ENCODE measurements at regions of chr6 and their contacts with region 1.

Region 1: DNA sequence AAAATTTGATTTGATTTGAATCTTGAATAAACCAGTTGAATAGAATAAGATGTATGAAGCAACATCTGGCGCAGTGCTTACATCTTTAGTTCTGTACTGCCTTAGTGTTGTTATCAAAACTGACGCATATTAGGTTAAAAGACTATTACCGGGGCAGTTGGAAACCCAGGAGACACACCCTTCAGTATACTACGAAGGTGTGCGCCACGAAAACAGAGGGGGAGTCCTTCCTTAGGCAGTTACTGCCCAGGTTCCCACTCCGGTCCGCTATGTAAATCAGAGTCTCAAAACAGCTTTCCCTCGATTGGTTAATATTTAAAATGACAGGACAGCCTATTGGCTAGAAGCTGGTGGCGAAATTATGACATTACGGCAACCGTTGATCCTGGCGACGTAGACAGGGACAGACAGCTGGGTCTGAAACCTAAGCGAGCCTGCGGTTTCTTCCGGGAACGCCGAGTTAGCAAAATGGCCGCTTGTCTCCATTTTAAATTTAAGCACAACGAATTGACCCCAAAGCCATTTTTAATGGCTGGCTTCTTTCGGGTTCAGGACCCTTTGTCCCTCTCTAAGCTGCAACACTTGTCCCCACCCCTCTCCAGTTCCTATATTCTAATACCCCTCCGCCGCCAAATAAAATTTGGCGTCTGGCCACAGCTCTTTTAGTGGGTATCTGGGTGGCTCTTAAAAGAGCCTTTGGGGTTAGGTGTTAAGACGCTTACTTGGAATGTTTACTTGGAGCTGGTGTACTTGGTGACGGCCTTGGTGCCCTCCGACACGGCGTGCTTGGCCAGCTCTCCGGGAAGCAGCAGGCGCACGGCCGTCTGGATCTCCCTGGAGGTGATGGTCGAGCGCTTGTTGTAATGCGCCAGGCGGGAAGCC is 35.8 kb downstream of the HFE start:
- DNase-seq: peak; percentile 99
- ATAC-seq: peak; percentile 50
- H3K4me3 ChIP-seq: peak overlapping the region; percentile 96
- H3K27ac ChIP-seq: peak overlapping the region; percentile 94
- H3K4me1 ChIP-seq: peaks cover 49% of the 10 kb centered on the region
- H3K27me3 ChIP-seq: no peaks in the 10 kb centered on the region
- CTCF ChIP-seq: no peak

Region 2: DNA sequence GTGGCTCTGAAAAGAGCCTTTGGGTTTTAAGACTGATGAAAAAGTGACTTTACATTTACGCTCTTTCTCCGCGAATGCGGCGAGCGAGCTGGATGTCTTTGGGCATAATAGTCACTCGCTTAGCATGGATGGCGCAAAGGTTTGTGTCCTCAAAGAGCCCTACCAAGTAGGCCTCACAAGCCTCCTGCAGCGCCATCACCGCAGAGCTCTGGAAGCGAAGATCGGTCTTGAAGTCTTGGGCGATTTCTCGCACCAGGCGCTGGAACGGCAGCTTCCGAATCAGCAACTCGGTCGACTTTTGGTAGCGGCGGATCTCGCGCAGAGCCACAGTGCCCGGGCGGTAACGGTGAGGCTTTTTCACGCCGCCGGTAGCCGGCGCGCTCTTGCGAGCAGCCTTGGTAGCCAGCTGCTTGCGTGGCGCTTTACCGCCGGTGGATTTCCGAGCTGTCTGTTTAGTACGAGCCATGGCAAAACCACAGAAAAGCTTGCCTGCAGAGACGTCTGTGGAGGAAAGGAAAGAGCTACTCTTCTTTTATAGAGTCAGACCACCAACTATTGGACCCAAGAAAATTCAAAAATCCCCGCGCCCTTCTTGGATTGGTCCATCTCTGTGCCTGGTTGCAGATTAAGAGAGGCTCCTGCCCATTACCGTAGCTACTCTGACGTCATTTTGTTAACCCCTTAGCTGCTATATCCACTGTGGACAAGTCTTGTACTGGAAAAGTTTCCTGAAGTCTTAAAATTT is 91.3 kb before region 1 on chr6:
- CTCF ChIA-PET with region 1: no interaction called
- POLR2A ChIA-PET with region 1: interaction called, 37 read pairs
- intact Hi-C with region 1: loop called (anchors 2 kb)
- DNase-seq: peak; percentile 99
- ATAC-seq: peak; percentile 60
- H3K4me3 ChIP-seq: peak overlapping the region; percentile 83
- H3K27ac ChIP-seq: peak overlapping the region; percentile 82
- H3K4me1 ChIP-seq: peaks cover 40% of the 10 kb centered on the region
- H3K27me3 ChIP-seq: no peaks in the 10 kb centered on the region
- CTCF ChIP-seq: no peak

Region 3: GRCh38 chr6:26054857-26055669 is 68.0 kb before region 1 on chr6:
- CTCF ChIA-PET with region 1: no interaction called
- POLR2A ChIA-PET with region 1: interaction called, 22 read pairs
- intact Hi-C with region 1: loop called (anchors 1 kb)
- DNase-seq: peak; percentile 93
- ATAC-seq: peak; percentile 53
- H3K4me3 ChIP-seq: peak overlapping the region; percentile 78
- H3K27ac ChIP-seq: peak overlapping the region; percentile 81
- H3K4me1 ChIP-seq: peaks cover 10% of the 10 kb centered on the region
- H3K27me3 ChIP-seq: no peaks in the 10 kb centered on the region
- CTCF ChIP-seq: no peak

Region 4: GRCh38 chr6:26156076-26156849 is 33.2 kb after region 1 on chr6:
- CTCF ChIA-PET with region 1: no interaction called
- POLR2A ChIA-PET with region 1: interaction called, 174 read pairs
- intact Hi-C with region 1: loop called (anchors 1 kb)
- DNase-seq: peak; percentile 95
- ATAC-seq: peak; percentile 47
- H3K4me3 ChIP-seq: peak overlapping the region; percentile 90
- H3K27ac ChIP-seq: peak overlapping the region; percentile 79
- H3K4me1 ChIP-seq: peaks cover 25% of the 10 kb centered on the region
- H3K27me3 ChIP-seq: no peaks in the 10 kb centered on the region
- CTCF ChIP-seq: no peak

Region 5: GRCh38 chr6:27146706-27147505 is 1023.9 kb after region 1 on chr6:
- CTCF ChIA-PET with region 1: no interaction called
- POLR2A ChIA-PET with region 1: interaction called, 6 read pairs
- intact Hi-C with region 1: loop called (anchors 5 kb)
- DNase-seq: peak; percentile 98
- ATAC-seq: peak; percentile 70
- H3K4me3 ChIP-seq: peak overlapping the region; percentile 82
- H3K27ac ChIP-seq: peak overlapping the region; percentile 86
- H3K4me1 ChIP-seq: peaks cover 22% of the 10 kb centered on the region; the same call in 1 of the 2 replicates
- H3K27me3 ChIP-seq: no peaks in the 10 kb centered on the region
- CTCF ChIP-seq: no peak

Region 6: DNA sequence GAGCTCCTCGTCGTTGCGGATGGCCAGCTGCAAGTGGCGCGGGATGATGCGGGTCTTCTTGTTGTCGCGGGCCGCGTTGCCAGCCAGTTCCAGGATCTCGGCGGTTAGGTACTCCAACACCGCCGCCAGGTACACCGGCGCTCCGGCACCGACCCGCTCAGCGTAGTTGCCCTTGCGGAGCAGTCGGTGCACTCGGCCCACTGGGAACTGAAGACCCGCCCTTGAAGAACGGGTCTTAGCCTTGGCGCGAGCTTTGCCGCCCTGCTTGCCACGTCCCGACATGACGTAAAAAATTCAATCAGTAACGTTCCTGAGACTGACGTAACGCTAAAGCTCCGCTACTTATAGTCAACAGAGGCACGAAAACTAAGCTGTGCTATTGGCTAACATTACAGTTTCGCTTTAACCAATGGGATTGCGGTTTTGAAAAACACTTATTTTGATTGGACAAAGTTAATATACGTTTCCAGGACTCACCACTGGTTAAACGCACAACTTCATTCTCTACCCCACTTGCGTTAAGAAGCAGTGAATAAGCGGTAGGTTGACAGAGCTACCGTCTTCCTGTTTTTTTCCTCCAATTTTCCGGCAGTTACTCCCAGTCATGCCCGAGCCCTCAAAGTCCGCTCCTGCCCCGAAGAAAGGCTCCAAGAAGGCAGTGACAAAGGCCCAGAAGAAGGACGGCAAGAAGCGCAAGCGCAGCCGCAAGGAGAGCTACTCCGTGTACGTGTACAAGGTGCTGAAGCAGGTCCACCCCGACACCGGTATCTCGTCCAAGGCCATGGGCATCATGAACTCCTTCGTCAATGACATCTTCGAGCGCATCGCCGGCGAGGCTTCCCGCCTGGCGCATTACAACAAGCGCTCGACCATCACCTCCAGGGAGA is 1715.3 kb after region 1 on chr6:
- CTCF ChIA-PET with region 1: no interaction called
- POLR2A ChIA-PET with region 1: interaction called, 4 read pairs
- intact Hi-C with region 1: loop called (anchors 10 kb)
- DNase-seq: peak; percentile 99
- ATAC-seq: peak; percentile 68
- H3K4me3 ChIP-seq: peak overlapping the region; percentile 85
- H3K27ac ChIP-seq: peak overlapping the region; percentile 93
- H3K4me1 ChIP-seq: peaks cover 17% of the 10 kb centered on the region
- H3K27me3 ChIP-seq: no peaks in the 10 kb centered on the region
- CTCF ChIP-seq: no peak

Measured in PC-3 (cell line).